ENCODE measurements at regions of chr2 and their contacts with region 1.

Region 1: GRCh38 chr2:44480068-44480467 is 118.3 kb downstream of the CAMKMT start:
- DNase-seq: no peak
- ATAC-seq: no peak
- H3K4me3 ChIP-seq: no peak overlapping the region
- H3K4me1 ChIP-seq: no peaks in the 10 kb centered on the region
- CTCF ChIP-seq: no peak

Region 2: GRCh38 chr2:44377486-44377885 is 102.6 kb before region 1 on chr2:
- intact Hi-C with region 1: no loop called
- DNase-seq: no peak
- ATAC-seq: no peak
- H3K4me3 ChIP-seq: no peak overlapping the region
- H3K4me1 ChIP-seq: no peaks in the 10 kb centered on the region
- CTCF ChIP-seq: no peak

Region 3: DNA sequence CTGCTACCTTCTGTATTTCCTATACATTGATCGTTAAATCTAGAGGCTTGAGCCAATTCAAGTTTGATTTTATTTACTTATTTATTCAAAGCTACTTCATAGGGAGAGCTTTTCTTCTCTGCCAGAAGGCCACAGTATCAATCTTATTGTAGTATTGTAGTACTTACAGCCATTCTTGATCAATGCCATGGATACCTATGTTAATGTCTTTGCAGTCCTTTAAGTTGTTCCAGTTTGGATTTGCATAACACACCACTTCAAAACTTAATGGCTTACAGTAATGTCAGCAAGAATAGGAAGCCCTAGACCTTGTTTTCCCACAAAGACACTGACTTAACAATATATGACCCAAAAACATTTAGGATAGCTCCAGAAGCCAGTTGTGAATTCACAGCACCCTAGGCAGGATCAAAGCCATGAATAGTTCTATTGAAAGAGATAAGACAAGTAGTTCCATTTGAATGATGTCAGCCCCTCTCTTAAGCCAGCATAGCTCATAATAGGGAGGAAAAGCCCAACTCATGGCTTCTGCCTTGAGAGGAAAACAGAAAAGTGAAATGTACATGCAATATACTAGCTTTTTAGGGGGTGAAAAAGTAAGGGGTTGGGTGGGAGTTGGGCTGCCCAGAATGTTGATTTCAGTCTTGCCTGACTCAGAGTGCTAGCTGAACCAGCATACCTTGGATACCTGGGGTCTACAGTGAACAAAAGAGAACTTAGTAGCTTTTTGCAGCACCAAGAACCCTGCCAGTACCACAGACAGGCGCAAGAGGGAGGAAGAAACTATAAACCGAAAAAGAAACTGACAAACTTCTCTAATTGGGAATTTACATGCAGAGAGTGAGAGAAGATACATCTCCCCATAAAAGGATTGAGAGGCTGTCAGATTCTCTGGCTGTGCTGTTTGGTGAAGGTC is 16.9 kb before region 1 on chr2:
- intact Hi-C with region 1: loop called in 1 of 2 experiments (anchors 2 kb)
- DNase-seq: no peak
- ATAC-seq: no peak
- H3K4me3 ChIP-seq: no peak overlapping the region
- H3K4me1 ChIP-seq: no peaks in the 10 kb centered on the region
- CTCF ChIP-seq: no peak

Region 4: GRCh38 chr2:44582363-44583008 is 102.4 kb after region 1 on chr2:
- intact Hi-C with region 1: no loop called
- DNase-seq: no peak
- ATAC-seq: no peak
- H3K4me3 ChIP-seq: no peak overlapping the region
- H3K4me1 ChIP-seq: no peaks in the 10 kb centered on the region
- CTCF ChIP-seq: no peak

Region 5: DNA sequence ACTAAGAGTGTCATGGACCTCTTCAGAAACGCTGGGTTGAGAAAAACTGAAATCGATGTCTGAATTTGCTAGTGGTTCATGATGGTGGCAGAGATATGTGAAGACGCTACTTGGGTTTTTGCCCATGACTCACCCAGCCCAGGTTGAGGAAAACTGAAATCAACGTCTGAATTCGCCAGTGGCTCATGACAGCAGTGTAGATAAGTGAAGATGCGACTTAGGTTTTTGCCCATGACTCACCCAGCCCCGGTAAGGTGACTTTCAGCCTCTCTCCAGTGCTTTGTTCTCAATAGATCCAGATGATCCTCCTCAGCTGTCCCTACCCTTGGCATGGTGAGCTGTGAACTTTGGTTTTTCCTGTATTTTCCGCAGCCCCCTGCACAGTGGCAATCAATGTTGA is 356.1 kb after region 1 on chr2:
- intact Hi-C with region 1: no loop called
- DNase-seq: no peak
- ATAC-seq: no peak
- H3K4me3 ChIP-seq: no peak overlapping the region
- H3K4me1 ChIP-seq: no peaks in the 10 kb centered on the region
- CTCF ChIP-seq: no peak

Region 6: GRCh38 chr2:44955593-44956392 is 475.7 kb after region 1 on chr2:
- intact Hi-C with region 1: loop called (anchors 5 kb)
- DNase-seq: peak in 2 of 3 donors; percentile 77 to 87
- ATAC-seq: peak; percentile 81
- H3K4me3 ChIP-seq: no peak overlapping the region
- H3K4me1 ChIP-seq: peaks cover 29% of the 10 kb centered on the region
- CTCF ChIP-seq: peak; percentile 78